ENCODE measurements at regions of chr22 and their contacts with region 1.

Region 1: GRCh38 chr22:37862570-37863325 is 13.5 kb downstream of the EIF3L start:
- DNase-seq: no peak
- ATAC-seq: no peak
- H3K4me3 Mint-ChIP-seq: no peak overlapping the region
- H3K27ac Mint-ChIP-seq: no peak overlapping the region
- H3K4me1 Mint-ChIP-seq: no peaks in the 10 kb centered on the region
- H3K27me3 Mint-ChIP-seq: no peaks in the 10 kb centered on the region
- CTCF ChIP-seq: no peak

Region 2: DNA sequence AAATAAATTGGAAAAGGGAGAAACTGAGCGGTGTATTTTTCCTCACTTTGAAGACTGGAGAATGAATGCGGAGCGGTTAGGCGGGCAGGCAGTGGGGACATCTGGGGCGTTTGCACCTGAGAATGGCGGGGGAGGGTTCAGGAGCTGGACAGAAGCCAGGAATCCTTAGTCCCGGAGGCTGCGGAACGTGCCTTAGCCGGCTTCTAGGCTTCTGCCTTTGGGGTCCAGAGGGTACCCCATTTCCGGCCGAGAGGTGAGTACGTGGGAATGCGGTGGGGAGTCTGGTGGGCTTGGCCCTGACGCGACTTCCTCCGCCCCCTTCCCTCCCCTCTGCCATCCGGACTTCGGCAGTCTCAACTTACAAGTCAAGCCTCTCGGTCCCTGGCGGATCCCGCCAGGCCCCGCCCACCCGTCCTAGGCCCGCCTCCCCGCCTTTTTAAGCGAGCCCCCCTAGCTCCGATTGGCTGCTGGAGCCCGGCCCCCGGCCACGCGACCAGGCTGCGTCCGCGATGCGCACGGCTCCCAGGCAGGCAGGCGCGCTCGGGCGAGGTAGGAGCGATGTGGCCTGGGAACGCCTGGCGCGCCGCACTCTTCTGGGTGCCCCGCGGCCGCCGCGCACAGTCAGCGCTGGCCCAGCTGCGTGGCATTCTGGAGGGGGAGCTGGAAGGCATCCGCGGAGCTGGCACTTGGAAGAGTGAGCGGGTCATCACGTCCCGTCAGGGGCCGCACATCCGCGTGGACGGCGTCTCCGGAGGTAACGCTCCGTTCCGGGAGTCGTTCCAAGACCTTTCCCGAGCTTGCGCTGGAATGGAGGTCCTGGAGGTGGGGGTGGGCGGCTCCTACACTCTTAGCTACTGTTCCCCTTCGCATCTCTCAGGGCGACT is 55.1 kb before region 1 on chr22 and contains the start of gene GCAT:
- CTCF ChIA-PET with region 1: interaction called, 25 read pairs
- POLR2A ChIA-PET with region 1: interaction called, 5 read pairs
- DNase-seq: peak; percentile 98
- ATAC-seq: peak; percentile 87
- H3K4me3 Mint-ChIP-seq: peak within 1 kb of the TSS; percentile 84
- H3K27ac Mint-ChIP-seq: no peak within 1 kb of the TSS
- H3K4me1 Mint-ChIP-seq: peaks cover 41% of the 10 kb centered on the region
- H3K27me3 Mint-ChIP-seq: peaks cover 59% of the 10 kb centered on the region
- CTCF ChIP-seq: no peak
- total RNA-seq, gene GCAT: 33.0 to 36.4 TPM (median 36.3 TPM) in 3 replicates

Region 3: GRCh38 chr22:37843741-37843990 is 19.1 kb before region 1 on chr22:
- CTCF ChIA-PET with region 1: interaction called, 22 read pairs
- POLR2A ChIA-PET with region 1: no interaction called
- DNase-seq: peak; percentile 59
- ATAC-seq: peak; percentile 19
- H3K4me3 Mint-ChIP-seq: peak overlapping the region; percentile 92
- H3K27ac Mint-ChIP-seq: peak overlapping the region; percentile 97
- H3K4me1 Mint-ChIP-seq: peaks cover 19% of the 10 kb centered on the region
- H3K27me3 Mint-ChIP-seq: no peaks in the 10 kb centered on the region
- CTCF ChIP-seq: no peak

Region 4: DNA sequence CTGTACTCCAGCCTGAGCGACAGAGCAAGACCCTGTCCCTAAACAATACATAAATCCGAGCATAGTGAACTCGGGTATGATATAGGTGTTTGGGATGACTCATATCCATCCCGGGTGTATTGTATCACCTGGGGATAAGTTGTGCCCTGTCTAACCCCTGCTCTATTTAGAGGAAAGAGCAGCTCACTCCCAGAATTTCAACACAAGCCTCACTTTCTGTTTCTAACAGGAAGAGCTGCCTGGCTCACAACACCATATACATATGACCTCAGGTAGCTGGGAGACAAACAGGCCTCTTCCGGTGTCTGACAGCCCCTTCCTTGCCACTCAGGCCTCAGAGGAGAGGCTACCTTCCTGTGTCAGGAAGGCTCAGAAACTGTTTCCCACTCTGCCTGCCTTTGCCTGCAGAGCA is 33.4 kb after region 1 on chr22:
- CTCF ChIA-PET with region 1: interaction called, 34 read pairs
- POLR2A ChIA-PET with region 1: no interaction called
- DNase-seq: no peak
- ATAC-seq: no peak
- H3K4me3 Mint-ChIP-seq: no peak overlapping the region
- H3K27ac Mint-ChIP-seq: peak overlapping the region; percentile 94
- H3K4me1 Mint-ChIP-seq: peaks cover 51% of the 10 kb centered on the region
- H3K27me3 Mint-ChIP-seq: no peaks in the 10 kb centered on the region
- CTCF ChIP-seq: no peak

Region 5: DNA sequence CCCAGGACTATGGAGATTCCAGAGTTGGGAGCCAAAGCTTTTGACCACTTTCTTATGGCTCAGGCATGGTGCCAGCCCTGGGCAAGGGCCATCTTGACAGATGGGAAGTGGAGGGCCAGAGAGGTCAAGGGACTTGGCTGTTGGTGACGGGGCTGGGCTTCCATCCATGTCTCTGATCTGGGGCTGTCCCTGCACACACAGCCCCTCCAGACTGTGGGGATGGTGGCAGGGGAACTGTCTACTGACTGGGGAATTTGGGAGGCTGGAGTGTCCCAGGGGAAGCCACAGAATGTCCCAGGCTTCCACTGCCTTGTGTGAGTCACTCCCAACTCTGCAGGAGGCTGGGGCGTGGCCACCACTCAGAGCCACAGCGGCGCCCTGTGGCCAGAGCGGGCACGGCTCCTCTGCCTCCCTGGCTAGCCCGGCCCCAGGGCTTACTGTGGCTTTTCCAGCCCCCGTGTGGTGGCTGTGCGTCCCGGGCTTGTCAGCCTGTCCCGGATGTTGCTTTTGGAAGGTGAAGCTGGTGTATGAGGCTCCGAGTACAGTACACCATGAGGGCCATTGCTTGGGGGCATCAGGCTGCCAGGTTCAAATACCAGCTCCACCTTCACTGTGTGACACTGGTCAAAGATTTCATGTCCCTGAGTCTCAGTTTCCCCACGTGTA is 71.1 kb after region 1 on chr22:
- CTCF ChIA-PET with region 1: interaction called, 17 read pairs
- POLR2A ChIA-PET with region 1: no interaction called
- DNase-seq: peak; percentile 97
- ATAC-seq: peak; percentile 97
- H3K4me3 Mint-ChIP-seq: no peak overlapping the region
- H3K27ac Mint-ChIP-seq: peak overlapping the region; percentile 72
- H3K4me1 Mint-ChIP-seq: peaks cover 3% of the 10 kb centered on the region
- H3K27me3 Mint-ChIP-seq: no peaks in the 10 kb centered on the region; the same call in 1 of the 2 replicates
- CTCF ChIP-seq: peak; percentile 77

Region 6: DNA sequence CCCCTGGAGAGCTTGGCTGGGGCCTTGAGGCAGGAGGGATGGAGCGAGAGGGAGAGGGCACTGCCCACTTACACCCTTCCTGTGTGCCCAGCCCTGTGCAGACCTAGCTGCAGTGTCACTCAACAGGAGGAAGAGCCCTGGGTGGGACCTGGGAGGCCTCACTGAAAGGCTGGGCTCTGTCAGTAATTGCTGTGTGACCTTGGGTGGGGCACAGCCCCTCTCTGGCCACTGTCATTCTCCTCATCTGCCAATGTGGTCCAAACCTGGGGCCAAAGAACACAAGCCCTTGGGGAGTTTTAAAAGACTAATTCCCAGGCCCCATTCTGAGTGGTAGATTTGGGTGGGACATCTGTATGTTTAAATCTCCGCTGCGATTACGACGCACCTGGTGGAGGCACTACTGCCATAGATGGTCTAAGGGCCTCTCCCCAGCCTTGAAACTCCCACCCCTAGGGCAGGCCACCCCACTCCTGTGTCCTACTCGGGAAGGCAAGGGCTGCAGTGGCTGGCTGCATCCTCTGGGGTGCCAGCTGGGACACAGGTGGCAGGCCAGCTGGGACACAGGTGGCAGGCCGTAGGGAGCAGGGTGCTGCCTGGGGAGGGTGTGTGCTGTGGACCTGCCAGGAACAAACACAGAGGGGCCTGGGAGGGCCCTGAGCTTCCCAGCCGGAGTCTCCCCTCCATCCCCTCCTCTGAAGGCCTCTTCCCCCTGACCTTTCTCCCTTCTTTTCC is 133.9 kb after region 1 on chr22:
- CTCF ChIA-PET with region 1: no interaction called
- POLR2A ChIA-PET with region 1: no interaction called
- DNase-seq: no peak
- ATAC-seq: peak; percentile 14; the same call in 1 of the 2 replicates
- H3K4me3 Mint-ChIP-seq: no peak overlapping the region
- H3K27ac Mint-ChIP-seq: no peak overlapping the region
- H3K4me1 Mint-ChIP-seq: peaks cover 27% of the 10 kb centered on the region
- H3K27me3 Mint-ChIP-seq: no peaks in the 10 kb centered on the region
- CTCF ChIP-seq: no peak

Region 7: DNA sequence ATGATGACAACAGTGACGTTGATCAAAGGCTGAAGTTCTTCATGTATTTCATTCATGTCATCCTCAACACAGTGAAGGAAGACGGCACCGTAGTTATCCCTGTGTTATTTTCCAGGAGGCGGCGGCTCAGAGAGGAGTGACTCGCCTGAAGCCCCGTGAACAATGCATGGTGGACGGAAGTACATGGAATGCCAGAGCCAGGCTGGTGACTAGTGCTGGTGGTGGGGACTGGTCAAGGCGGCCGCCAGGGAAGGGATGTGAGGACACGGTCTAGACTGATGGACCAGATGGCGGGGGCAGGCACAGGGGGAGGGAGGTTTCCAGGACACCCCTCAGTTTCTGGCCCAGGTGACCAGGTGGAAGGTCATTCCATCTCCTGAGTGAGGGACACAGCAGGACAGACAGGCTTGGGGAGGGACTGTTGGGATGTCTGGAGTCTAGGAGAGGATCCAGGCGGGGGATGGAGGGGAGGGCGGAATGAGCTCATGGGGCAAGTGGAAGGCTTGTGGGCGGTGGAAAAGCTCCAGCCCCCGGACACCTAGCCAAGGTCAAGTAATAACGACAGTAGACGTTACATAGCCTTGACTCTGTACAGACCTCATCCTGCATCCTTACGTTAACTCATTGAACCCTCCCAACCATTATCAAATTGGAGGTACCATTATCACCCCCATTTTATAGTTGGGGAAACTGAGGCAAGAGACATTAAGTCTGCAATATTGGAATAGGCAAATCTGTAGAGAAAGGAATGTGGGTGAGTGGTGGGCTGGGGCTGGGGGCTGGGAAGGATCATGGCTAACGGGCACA is 178.4 kb after region 1 on chr22:
- CTCF ChIA-PET with region 1: no interaction called
- POLR2A ChIA-PET with region 1: no interaction called
- DNase-seq: no peak
- ATAC-seq: no peak
- H3K4me3 Mint-ChIP-seq: no peak overlapping the region
- H3K27ac Mint-ChIP-seq: no peak overlapping the region
- H3K4me1 Mint-ChIP-seq: no peaks in the 10 kb centered on the region
- H3K27me3 Mint-ChIP-seq: no peaks in the 10 kb centered on the region; the same call in 1 of the 2 replicates
- CTCF ChIP-seq: no peak